ENCODE measurements at regions of chrX and their contacts with region 1.

Region 1: GRCh38 chrX:21612154-21612553 is 46.0 kb downstream of the KLHL34 start:
- DNase-seq: no peak
- ATAC-seq: no peak
- H3K4me3 ChIP-seq: no peak overlapping the region
- H3K27ac ChIP-seq: no peak overlapping the region
- H3K4me1 ChIP-seq: no peaks in the 10 kb centered on the region
- H3K27me3 ChIP-seq: no peaks in the 10 kb centered on the region
- CTCF ChIP-seq: no peak
- EP300 ChIP-seq: no peak
- POLR2A ChIP-seq: no peak
- RAD21 ChIP-seq: no peak

Region 2: DNA sequence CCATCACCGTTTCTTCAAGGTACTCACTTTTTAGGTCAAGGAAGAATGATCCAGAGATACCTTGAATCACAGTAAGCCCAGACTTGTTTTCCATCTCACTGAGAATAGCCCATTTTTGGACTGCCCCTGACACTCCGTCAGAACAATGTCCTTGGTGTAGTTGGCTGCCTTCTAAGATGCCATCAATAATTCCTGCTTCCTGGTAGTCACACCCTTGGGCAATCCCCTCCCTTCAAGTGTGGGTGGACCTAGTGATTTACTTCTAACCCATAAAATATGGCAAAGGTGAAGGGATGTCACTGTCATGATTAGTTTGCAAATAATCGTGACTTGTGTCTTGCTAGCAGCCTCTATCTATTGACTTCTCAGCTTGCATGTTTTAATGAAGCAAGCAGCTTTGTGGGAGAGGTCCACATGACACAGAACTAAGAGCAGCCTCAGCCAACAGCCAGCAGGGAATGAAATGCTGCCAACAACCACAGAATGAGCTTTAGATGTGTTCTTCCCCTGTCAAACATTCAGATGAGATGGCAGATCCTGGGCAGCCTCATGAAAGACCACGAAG is 66.0 kb after region 1 on chrX:
- CTCF ChIA-PET with region 1: no interaction called
- POLR2A ChIA-PET with region 1: no interaction called
- RAD21 ChIA-PET with region 1: no interaction called
- SMC1A ChIA-PET with region 1: no interaction called
- in situ Hi-C with region 1: no loop called
- intact Hi-C with region 1: loop called (anchors 10 kb)
- DNase-seq: no peak
- ATAC-seq: no peak
- H3K4me3 ChIP-seq: no peak overlapping the region
- H3K27ac ChIP-seq: no peak overlapping the region
- H3K4me1 ChIP-seq: no peaks in the 10 kb centered on the region
- H3K27me3 ChIP-seq: no peaks in the 10 kb centered on the region
- CTCF ChIP-seq: no peak
- EP300 ChIP-seq: no peak
- POLR2A ChIP-seq: no peak
- RAD21 ChIP-seq: no peak